ENCODE measurements at regions of chr11 and their contacts with region 1.

Region 1: DNA sequence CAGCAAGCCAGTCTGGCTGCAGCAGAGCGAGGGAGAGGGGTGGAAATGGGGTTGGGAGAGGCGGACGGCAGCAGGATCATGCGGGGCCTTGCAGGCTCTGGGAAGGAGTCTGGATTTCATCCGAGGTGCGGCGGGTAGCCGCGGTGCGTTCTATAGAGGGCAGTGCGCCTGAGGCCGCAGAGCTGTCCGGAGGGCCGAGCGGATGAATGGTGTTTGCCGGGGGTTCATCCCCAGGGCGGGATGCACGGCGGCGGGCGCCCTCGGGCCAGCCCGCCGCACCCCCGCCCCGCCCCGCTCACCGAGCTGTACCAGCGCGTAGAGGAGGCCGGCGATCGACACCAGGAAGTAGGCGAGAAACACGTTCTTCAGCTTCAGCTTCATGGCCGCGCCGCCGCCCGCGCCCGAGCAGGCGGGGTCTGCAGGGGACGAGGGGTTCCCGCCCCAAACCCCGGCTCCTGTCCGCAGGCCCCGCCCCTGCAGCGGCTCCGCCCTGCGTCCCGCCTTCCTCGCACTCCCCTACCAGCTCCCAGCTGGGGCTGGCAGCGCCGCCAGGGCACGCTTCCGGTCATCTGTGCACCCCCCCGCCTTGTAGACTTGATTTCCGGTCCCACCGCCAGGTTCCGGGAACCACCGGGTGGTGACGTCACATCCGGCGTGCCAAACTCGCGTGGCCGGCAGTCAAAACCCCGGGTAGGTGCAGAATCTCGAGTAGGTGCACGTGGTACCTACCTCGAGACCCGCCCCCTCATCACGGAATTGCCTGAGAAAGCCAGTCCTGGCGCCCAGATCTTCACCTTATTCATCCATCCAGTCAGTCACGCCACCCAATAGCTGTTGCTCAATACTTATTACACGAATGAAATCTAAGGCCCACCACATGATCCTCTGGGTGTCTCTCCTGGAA is at the start of gene B3GAT3:
- DNase-seq: peak; percentile 99
- H3K4me3 ChIP-seq: peak within 1 kb of the TSS; percentile 79
- H3K27ac ChIP-seq: peak within 1 kb of the TSS; percentile 83
- H3K4me1 ChIP-seq: peaks cover 25% of the 10 kb centered on the region
- CTCF ChIP-seq: 0 out of 2 replicates have a peak, but pooled peaks have one; percentile 20
- total RNA-seq, gene B3GAT3: 55.8 and 74.3 TPM in 2 replicates

Region 2: GRCh38 chr11:62591448-62592145 is 30.2 kb before region 1 on chr11 and contains the start of gene TUT1:
- CTCF ChIA-PET with region 1: interaction called, 4 read pairs
- POLR2A ChIA-PET with region 1: interaction called, 8 read pairs
- intact Hi-C with region 1: loop called (anchors 2 kb)
- DNase-seq: peak; percentile 100
- H3K4me3 ChIP-seq: peak within 1 kb of the TSS; percentile 85
- H3K27ac ChIP-seq: peak within 1 kb of the TSS; percentile 79
- H3K4me1 ChIP-seq: peaks cover 33% of the 10 kb centered on the region
- CTCF ChIP-seq: 0 out of 2 replicates have a peak, but pooled peaks have one; percentile 7
- total RNA-seq, gene TUT1: 15.6 and 22.5 TPM in 2 replicates

Region 3: GRCh38 chr11:62601394-62602140 is 20.3 kb before region 1 on chr11 and contains the start of gene MTA2:
- CTCF ChIA-PET with region 1: no interaction called
- POLR2A ChIA-PET with region 1: interaction called, 11 read pairs
- intact Hi-C with region 1: no loop called
- DNase-seq: peak; percentile 99
- H3K4me3 ChIP-seq: peak within 1 kb of the TSS; percentile 98
- H3K27ac ChIP-seq: peak within 1 kb of the TSS; percentile 87
- H3K4me1 ChIP-seq: peaks cover 24% of the 10 kb centered on the region
- CTCF ChIP-seq: no peak
- total RNA-seq, gene MTA2: 130 and 133 TPM in 2 replicates

Region 4: GRCh38 chr11:62645956-62646824 is 24.4 kb after region 1 on chr11 and contains the start of gene GANAB:
- CTCF ChIA-PET with region 1: no interaction called
- POLR2A ChIA-PET with region 1: interaction called, 11 read pairs
- intact Hi-C with region 1: no loop called
- DNase-seq: peak; percentile 99
- H3K4me3 ChIP-seq: peak within 1 kb of the TSS; percentile 95
- H3K27ac ChIP-seq: peak within 1 kb of the TSS; percentile 76
- H3K4me1 ChIP-seq: peaks cover 20% of the 10 kb centered on the region
- CTCF ChIP-seq: no peak
- total RNA-seq, gene GANAB: 91.4 and 108 TPM in 2 replicates

Region 5: GRCh38 chr11:62652161-62653006 is 30.6 kb after region 1 on chr11:
- CTCF ChIA-PET with region 1: interaction called, 7 read pairs
- POLR2A ChIA-PET with region 1: interaction called, 4 read pairs
- intact Hi-C with region 1: loop called (anchors 2 kb)
- DNase-seq: no peak
- H3K4me3 ChIP-seq: peak overlapping the region; percentile 97
- H3K27ac ChIP-seq: peak overlapping the region; percentile 73
- H3K4me1 ChIP-seq: peaks cover 26% of the 10 kb centered on the region
- CTCF ChIP-seq: no peak